ENCODE measurements at regions of chr18 and their contacts with region 1.

Region 1: GRCh38 chr18:55343396-55344073 is 244.5 kb downstream of the TCF4 start:
- DNase-seq: no peak
- H3K4me3 ChIP-seq: no peak overlapping the region
- H3K27ac ChIP-seq: peak overlapping the region in 1 of 4 donors; percentile 30
- H3K4me1 ChIP-seq: peaks cover 0 to 64% (median 41%) of the 10 kb centered on the region in 4 donors
- H3K27me3 ChIP-seq: no peaks in the 10 kb centered on the region
- CTCF ChIP-seq: peak; percentile 48 to 62 (median 55)
- EP300 ChIP-seq: no peak
- POLR2A ChIP-seq: no peak

Region 2: GRCh38 chr18:55199291-55199963 is 144.1 kb before region 1 on chr18:
- intact Hi-C with region 1: no loop called
- DNase-seq: no peak
- H3K4me3 ChIP-seq: no peak overlapping the region
- H3K27ac ChIP-seq: no peak overlapping the region
- H3K4me1 ChIP-seq: no peaks in the 10 kb centered on the region
- H3K27me3 ChIP-seq: no peaks in the 10 kb centered on the region
- CTCF ChIP-seq: no peak
- EP300 ChIP-seq: no peak
- POLR2A ChIP-seq: no peak

Region 3: DNA sequence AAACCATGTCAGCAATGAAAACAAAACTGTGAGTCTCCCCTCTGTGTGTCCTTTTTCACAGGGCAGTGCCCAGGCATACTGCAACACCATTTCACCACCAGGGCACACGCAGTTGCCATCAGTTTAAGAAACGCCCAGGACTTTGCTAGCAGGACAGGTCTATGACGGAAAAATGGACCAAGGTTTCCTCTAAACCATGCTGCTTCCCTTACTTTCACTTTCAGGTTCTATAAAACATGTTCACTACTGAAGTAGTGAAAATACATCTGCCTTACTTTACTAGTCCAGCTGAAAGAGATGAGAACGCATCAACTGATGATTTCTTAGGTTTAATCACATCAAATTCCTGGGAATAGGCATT is 133.9 kb after region 1 on chr18:
- intact Hi-C with region 1: loop called (anchors 5 kb)
- DNase-seq: no peak
- H3K4me3 ChIP-seq: peak overlapping the region; percentile 35 to 55 (median 51)
- H3K27ac ChIP-seq: peak overlapping the region; percentile 77 to 84 (median 82)
- H3K4me1 ChIP-seq: peaks cover 0 to 26% (median 12%) of the 10 kb centered on the region in 4 donors
- H3K27me3 ChIP-seq: no peaks in the 10 kb centered on the region
- CTCF ChIP-seq: peak in 1 of 4 experiments; percentile 39
- EP300 ChIP-seq: no peak
- POLR2A ChIP-seq: no peak

Region 4: DNA sequence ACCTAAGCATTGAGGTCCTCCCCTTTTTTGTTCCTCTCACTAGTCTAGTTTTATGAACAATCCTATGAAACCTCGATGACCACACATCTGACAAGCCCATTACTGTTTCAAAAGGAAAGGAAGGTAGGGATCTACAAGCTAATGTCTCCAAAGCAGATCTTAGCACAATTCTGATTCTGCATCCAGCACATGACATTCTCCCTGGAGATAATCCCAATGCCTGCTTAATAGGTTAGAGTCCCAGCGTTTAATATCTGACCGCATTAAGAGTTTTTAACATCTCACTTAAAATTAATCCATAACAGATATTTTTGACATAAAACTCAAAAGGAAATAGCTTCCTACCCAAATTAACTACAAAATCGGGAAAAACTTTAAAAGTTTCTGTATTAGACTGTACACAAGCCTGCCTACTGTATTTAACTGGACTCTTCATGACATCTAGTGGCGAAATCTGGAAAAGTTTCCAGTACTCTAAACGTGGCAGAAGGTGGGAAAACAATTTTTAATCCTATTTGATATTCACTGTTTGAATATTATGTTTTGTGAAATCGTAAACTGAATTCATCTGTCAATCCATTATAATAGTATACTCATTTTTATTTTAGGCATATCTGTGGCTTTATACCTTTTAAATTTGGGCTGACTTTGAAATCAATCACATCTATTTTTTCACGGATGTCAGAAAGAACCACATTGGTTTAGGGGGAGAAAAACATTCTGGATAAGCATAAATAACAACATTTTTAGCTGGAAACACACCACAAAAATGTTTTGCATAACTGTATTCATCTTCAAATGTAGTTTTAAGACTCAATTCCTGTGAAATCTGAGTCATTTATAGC is 1232.5 kb after region 1 on chr18:
- intact Hi-C with region 1: loop called (anchors 10 kb)
- DNase-seq: no peak
- H3K4me3 ChIP-seq: no peak overlapping the region
- H3K27ac ChIP-seq: no peak overlapping the region
- H3K4me1 ChIP-seq: peaks cover 0 to 16% (median 9%) of the 10 kb centered on the region in 4 donors
- H3K27me3 ChIP-seq: no peaks in the 10 kb centered on the region
- CTCF ChIP-seq: peak; percentile 28 to 66 (median 62)
- EP300 ChIP-seq: no peak
- POLR2A ChIP-seq: no peak